Dorsolateral prefrontal cortex (tissue), 120 donors: ENCODE measurements at regions of chr12 and their contacts with region 1.

Region 1: DNA sequence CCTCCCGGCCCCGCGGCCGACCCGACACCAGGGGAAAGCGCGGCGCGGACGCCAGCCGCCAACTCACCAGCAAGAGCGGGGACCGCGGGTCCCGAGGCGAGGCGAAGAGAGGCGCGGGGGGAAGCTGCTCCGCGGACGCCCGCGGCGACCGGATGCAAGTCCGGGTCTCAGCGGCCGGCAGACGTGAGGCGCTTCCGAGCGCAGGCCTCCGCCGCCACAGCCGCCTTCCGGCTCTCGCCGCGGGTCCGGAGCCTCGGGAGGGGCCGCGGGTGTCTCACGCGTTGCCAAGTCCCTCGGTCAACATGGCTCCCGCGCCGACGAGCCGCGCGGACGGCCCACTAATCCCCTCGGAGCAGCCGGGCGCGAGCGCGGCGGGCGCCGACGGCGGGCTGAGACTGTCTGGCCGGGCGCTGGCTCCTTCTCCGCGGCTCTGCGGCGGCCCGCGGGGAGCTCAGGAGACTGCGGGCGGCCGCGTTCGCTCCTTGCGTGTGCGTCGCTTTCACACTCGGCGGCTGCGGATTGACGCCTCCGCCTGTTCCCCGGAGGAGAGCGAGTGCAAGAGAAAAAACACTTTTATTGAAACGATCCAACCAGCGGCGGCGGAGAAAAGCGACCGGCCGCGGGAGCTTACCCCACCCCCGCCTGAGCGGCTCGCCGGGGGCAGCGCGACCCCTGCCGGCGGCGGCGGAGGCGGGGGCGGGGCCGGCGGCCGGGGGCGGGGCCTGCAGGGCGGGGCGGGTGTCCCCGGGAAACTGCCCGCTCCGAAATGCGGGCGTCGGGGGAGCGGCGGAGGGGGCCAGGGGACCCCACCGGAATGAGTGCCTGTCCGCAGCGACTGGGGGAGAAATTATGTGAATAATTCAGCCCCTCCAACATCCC is at the start of gene CDK17:
- DNase-seq: peak; percentile 71 to 87 (median 82)
- H3K4me3 ChIP-seq: peak within 1 kb of the TSS; percentile 68 to 97 (median 90)
- H3K27ac ChIP-seq: peak within 1 kb of the TSS; percentile 93 to 100 (median 99)
- H3K27me3 ChIP-seq: no peaks in the 10 kb centered on the region
- CTCF ChIP-seq: peak in 49 of 56 donors; percentile 5 to 78 (median 45)
- total RNA-seq, gene CDK17: 56.6 to 132 (median 97.6) TPM

Region 2: GRCh38 chr12:96035278-96036236 is 364.6 kb before region 1 on chr12 and contains the start of gene LTA4H:
- intact Hi-C with region 1: loop called (anchors 5 kb)
- DNase-seq: peak; percentile 95 to 99 (median 97)
- H3K4me3 ChIP-seq: peak within 1 kb of the TSS; percentile 57 to 99 (median 93)
- H3K27ac ChIP-seq: peak within 1 kb of the TSS; percentile 21 to 95 (median 86)
- H3K27me3 ChIP-seq: no peaks in the 10 kb centered on the region
- CTCF ChIP-seq: peak in 22 of 56 donors; percentile 4 to 41 (median 12)
- total RNA-seq, gene LTA4H: 23.3 to 51.5 (median 38.7) TPM

Region 3: GRCh38 chr12:96219698-96220206 is 180.4 kb before region 1 on chr12:
- intact Hi-C with region 1: loop called (anchors 2 to 5 kb)
- DNase-seq: no peak
- H3K4me3 ChIP-seq: no peak overlapping the region
- H3K27ac ChIP-seq: no peak overlapping the region
- H3K27me3 ChIP-seq: no peaks in the 10 kb centered on the region
- CTCF ChIP-seq: no peak

Region 4: DNA sequence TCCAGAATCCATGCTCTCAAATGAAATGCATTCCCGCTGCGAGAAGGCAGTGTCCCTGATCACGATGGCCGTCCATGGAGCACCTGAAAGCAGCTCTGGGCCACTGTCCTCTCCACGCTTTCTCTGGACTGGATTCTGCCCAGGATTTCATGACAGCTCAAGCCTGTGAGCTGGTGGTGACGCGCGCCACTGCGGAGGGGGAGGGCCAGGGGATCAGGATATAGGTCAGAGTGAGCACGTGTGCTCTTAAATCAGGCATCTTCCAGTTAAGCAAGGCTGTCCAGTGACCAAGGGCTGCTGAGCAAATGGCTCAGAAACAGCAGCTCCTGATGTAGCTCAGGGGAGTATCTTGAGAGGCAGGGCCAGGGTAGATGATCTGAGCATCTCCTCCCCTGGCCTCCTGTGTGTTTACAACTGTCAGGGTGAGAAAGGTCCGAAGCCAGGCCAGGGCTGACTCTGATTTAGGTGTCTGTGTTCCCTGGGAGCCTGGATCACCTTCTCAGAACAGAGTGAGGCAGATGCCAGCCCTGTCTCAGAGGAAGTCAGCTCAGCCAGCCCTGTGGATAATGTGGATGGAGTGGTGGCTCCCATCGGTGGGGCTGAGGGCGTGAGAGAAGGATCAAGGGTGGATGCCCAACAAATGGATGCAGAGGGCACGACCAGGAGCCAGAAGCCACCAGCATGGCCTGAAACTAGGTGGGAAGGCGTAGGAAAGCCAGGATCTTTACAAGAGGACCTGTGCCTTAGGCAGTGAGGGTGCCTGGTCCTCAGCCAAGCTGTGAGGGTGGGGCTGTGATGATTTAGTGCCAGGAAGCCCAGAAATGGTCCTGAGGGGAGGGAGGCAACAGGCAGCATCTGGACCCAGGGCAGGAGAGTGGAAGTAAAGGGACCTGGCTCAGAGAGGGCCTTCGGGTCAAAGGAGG is 150.7 kb before region 1 on chr12:
- intact Hi-C with region 1: no loop called
- DNase-seq: peak in 2 of 10 donors; percentile 38 to 69
- H3K4me3 ChIP-seq: peak overlapping the region in 1 of 59 donors; percentile 47
- H3K27ac ChIP-seq: peak overlapping the region in 39 of 59 donors; percentile 2 to 78 (median 39)
- H3K27me3 ChIP-seq: no peaks in the 10 kb centered on the region
- CTCF ChIP-seq: no peak

Region 5: DNA sequence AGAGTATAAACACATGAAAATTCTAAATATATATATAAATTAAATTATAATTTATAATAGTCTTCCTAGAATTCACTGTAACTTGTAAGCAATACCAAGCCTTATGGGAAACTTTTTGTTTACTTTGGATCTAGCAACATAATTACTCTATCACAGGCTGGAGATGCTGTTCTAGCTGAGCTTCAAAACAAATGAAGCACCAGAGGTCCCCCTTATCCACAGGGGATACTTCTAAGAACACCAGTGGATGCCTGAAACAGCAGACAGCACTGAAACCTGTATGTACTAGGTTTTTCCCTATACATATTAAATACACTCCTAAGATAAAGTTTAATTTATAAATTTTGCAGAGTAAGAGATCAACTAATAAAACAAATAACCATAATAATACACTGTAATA is 96.5 kb before region 1 on chr12:
- intact Hi-C with region 1: loop called (anchors 1 kb)
- DNase-seq: no peak
- H3K4me3 ChIP-seq: peak overlapping the region in 6 of 59 donors; percentile 11 to 44 (median 18)
- H3K27ac ChIP-seq: peak overlapping the region; percentile 4 to 97 (median 89)
- H3K27me3 ChIP-seq: no peaks in the 10 kb centered on the region
- CTCF ChIP-seq: peak in 9 of 56 donors; percentile 6 to 25 (median 20)

Region 6: DNA sequence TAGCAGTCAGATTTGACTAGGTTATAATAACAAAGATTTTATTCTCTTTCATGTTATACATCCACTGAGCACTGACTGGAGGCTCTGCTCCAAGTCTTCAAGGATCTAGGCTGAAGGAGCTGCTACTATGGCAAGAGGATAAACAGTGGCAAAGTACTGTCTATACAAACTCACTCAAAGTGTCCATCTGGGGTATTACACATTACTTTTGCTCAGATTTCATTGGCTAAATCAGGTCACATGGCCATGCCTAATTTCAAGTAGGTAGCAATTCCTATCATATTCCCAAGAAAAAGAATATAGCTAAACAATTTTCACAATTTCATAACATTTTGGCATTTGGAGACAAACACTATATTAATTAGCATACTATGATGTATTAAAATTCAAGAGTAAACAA is 40.8 kb before region 1 on chr12:
- intact Hi-C with region 1: no loop called
- DNase-seq: no peak
- H3K4me3 ChIP-seq: no peak overlapping the region
- H3K27ac ChIP-seq: peak overlapping the region in 1 of 59 donors; percentile 3
- H3K27me3 ChIP-seq: no peaks in the 10 kb centered on the region
- CTCF ChIP-seq: no peak

Region 7: DNA sequence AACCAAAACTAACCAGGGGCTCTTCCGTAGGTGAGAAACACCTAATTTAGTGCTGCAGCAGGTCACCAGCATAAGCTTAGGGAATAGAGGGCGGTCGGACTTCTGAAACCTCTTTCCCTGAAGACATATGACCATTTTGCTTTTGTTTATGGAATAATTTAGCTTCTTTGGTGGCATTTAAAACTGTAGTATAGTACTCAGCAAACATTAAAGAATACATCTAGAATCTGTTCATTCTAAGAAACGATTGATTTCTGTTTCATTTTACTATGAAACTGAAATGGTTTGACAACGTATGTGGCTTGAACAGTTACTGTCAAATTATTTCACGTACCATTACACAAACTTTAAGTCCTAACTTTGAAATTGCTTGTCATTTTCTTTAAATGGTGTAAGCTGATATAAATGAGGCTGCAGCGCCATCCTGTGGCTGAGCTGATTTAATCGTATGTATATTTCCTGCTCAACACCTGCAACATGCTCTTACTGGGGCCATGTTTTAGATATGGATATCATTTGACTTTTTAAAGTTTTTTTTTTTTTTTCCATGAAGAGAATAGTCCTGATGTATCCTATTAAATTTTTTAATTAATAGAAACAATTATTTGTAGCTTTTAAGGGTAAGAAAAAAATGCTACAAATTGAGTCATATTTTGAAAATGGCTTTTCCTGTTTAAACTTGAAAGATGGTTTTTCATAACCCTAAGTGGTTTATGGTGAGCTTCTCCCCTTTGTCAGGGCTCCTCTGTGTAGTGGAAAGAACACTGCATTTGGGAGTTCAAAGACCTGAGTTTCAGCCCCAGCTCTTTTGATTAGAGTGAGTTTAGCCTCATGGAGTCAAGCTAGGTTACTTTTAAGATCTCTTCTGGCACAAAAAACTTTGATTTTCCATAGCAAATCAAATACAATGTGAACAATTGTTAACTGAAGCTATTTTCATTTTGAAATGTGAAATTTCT is 116.6 kb after region 1 on chr12:
- intact Hi-C with region 1: loop called in 1 of 2 experiments (anchors 5 kb)
- DNase-seq: peak; percentile 58 to 91 (median 68)
- H3K4me3 ChIP-seq: no peak overlapping the region
- H3K27ac ChIP-seq: no peak overlapping the region
- H3K27me3 ChIP-seq: no peaks in the 10 kb centered on the region
- CTCF ChIP-seq: peak; percentile 63 to 92 (median 78)